Right ventricle myocardium superior (tissue), 1 donor: ENCODE measurements at regions of chr9 and their contacts with region 1.

Region 1: GRCh38 chr9:7094052-7094451 is 336.3 kb downstream of the KDM4C start:
- DNase-seq: no peak
- ATAC-seq: peak; percentile 57

Region 2: GRCh38 chr9:6938447-6938846 is 155.6 kb before region 1 on chr9:
- intact Hi-C with region 1: no loop called
- DNase-seq: no peak
- ATAC-seq: peak; percentile 57

Region 3: DNA sequence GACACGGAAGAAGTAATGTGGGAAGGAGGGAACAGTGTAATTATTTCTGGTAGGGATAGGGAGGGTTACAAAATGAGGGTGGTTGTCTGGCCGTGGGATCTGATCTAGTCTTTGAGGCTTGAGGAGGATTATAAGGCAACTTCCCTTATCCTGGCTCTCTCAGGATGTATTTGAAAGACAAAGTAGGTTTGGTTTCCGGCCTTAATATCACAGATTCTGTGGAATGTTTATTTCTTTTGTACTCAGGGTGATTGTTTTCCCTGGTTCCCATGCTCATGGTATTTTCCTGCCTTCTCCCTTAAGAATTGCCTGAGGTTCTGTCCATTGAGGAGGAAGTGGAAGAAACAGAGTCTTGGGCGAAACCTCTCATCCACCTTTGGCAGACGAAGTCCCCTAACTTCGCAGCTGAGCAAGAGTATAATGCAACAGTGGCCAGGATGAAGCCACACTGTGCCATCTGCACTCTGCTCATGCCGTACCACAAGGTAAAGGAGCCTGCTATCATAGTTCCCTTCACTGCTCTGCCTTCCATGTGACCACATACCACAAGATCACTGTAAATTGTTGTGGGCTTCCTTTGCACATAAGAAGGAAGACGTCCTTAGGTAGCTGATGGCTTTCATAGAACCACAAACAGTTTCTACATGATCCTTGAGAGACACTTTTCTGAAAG is 82.5 kb before region 1 on chr9:
- intact Hi-C with region 1: no loop called
- DNase-seq: no peak
- ATAC-seq: no peak

Region 4: DNA sequence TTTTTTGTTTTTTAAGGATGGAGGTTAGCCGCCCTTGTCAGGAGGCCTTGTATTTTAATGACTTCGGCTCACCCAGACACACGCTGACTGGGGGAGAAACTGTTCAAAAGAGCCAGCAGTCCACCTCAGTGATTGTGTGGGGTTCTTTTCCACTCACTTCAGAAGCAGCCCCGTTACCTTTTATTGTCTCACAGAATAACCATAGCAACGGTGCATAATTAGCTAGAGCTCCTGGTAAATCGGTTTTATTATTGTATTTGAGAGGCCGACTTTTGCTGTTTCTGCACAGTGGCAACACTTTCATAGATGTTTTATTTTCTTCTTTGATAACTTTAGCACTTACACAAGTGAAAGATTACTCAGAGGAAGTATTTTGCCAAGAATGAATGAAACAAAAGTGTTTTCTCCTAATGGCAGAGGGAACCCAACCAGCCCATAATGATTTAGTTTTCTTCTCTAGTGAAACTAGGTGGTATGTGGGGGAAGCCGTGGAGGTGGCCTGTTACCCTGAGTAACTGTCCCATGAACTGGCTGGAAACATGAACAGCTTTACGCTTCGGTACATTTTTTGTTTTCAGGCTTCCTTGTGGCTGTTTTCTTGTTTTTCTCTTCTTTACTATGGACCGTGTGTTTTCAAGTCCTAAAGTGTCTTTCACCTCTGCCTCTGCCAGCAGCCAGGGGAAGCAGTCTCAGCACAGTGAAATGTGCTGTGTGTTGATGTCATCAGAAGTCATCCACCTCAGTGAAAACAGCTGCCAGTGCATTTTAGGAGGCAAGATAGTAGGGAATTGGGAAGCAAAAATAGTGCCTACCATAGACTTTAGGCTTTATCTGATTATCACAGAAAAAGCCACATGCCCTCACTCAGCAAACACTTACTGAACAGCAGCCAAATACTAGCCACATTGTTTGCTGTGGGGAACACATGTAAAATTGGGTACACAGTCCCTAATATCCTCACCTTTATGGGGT is 78.4 kb after region 1 on chr9:
- intact Hi-C with region 1: loop called (anchors 10 kb)
- DNase-seq: no peak
- ATAC-seq: peak; percentile 60

Region 5: GRCh38 chr9:7212101-7212500 is 118.0 kb after region 1 on chr9:
- intact Hi-C with region 1: no loop called
- DNase-seq: no peak
- ATAC-seq: no peak